ENCODE measurements at regions of chr17 and their contacts with region 1.

Region 1: DNA sequence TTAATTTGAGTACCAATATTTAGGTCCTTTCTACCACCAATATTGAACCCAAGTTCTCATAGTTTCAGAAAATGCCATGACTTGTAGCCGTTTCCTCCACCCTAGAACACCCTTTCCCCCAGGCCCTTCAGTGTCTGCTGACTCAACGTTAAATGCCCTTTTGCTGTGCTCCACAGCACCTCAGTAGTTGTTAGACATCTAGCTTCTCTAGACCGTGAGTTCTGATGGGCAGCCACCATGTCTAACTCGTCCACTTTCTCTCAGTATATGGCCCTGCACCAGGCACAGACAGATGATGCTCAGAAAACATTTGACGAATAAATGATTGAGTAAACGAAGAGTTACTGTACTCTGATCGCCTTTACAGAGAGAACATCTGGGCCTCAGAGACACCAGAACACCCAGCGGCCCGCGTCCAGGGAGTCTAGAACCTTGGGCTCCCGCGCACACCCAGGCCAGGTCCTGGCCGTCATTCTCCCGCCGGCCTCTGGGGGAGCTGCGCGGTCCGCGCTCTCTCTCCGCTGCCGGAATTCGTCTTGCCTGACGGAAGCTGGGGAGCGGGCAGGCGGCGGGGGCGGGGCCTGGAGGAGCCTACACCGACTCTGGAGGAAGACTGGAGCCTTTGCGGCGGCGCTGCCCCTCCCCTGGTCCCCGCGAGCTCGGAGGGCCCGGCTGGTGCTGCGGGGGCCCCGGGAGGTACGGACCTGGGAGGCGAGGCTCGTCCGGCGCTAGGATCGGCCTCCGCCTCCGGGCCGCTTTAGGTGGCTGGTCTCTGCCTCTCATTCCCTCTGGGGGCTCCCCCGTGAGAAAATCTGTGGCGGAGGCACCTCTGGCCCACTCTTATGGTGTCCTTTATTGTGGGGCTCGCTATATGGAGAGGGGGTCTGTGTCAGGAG is at the start of gene NKIRAS2:
- DNase-seq: peak; percentile 97
- ATAC-seq: peak; percentile 78
- H3K4me3 Mint-ChIP-seq: peak within 1 kb of the TSS; percentile 100
- H3K27ac Mint-ChIP-seq: peak within 1 kb of the TSS; percentile 88
- H3K4me1 Mint-ChIP-seq: peaks cover 52% of the 10 kb centered on the region
- H3K27me3 Mint-ChIP-seq: no peaks in the 10 kb centered on the region
- total RNA-seq, gene NKIRAS2: 16.3 to 17.2 TPM

Region 2: GRCh38 chr17:41864836-41865595 is 154.7 kb before region 1 on chr17 and contains the start of gene KLHL11:
- CTCF ChIA-PET with region 1: interaction called, 5 read pairs
- POLR2A ChIA-PET with region 1: interaction called, 3 read pairs
- intact Hi-C with region 1: loop called (anchors 2 to 5 kb)
- DNase-seq: peak; percentile 94
- ATAC-seq: peak; percentile 88
- H3K4me3 Mint-ChIP-seq: no peak within 1 kb of the TSS
- H3K27ac Mint-ChIP-seq: peak within 1 kb of the TSS; percentile 68
- H3K4me1 Mint-ChIP-seq: peaks cover 49% of the 10 kb centered on the region
- H3K27me3 Mint-ChIP-seq: no peaks in the 10 kb centered on the region
- total RNA-seq, gene KLHL11: 16.4 to 18.0 TPM

Region 3: GRCh38 chr17:41966463-41967140 is 53.2 kb before region 1 on chr17 and contains the start of gene CNP:
- CTCF ChIA-PET with region 1: interaction called, 16 read pairs
- POLR2A ChIA-PET with region 1: interaction called, 23 read pairs
- intact Hi-C with region 1: loop called (anchors 1 kb)
- DNase-seq: peak; percentile 95
- ATAC-seq: peak; percentile 75
- H3K4me3 Mint-ChIP-seq: peak within 1 kb of the TSS; percentile 79
- H3K27ac Mint-ChIP-seq: peak within 1 kb of the TSS; percentile 82
- H3K4me1 Mint-ChIP-seq: peaks cover 36% of the 10 kb centered on the region
- H3K27me3 Mint-ChIP-seq: no peaks in the 10 kb centered on the region
- total RNA-seq, gene CNP: 55.1 to 77.0 TPM

Region 4: GRCh38 chr17:42067351-42068091 is 47.8 kb after region 1 on chr17:
- CTCF ChIA-PET with region 1: interaction called, 5 read pairs
- POLR2A ChIA-PET with region 1: no interaction called
- intact Hi-C with region 1: loop called in 1 of 2 experiments (anchors 2 kb)
- DNase-seq: peak; percentile 85
- ATAC-seq: peak; percentile 62
- H3K4me3 Mint-ChIP-seq: no peak overlapping the region
- H3K27ac Mint-ChIP-seq: no peak overlapping the region
- H3K4me1 Mint-ChIP-seq: peaks cover 21% of the 10 kb centered on the region
- H3K27me3 Mint-ChIP-seq: peaks cover 9% of the 10 kb centered on the region

Region 5: GRCh38 chr17:42153919-42154742 is 134.4 kb after region 1 on chr17:
- CTCF ChIA-PET with region 1: interaction called, 3 read pairs
- POLR2A ChIA-PET with region 1: interaction called, 3 read pairs
- intact Hi-C with region 1: loop called in 1 of 2 experiments (anchors 1 kb)
- DNase-seq: no peak
- ATAC-seq: no peak
- H3K4me3 Mint-ChIP-seq: peak overlapping the region; percentile 97
- H3K27ac Mint-ChIP-seq: peak overlapping the region; percentile 93
- H3K4me1 Mint-ChIP-seq: peaks cover 31% of the 10 kb centered on the region
- H3K27me3 Mint-ChIP-seq: no peaks in the 10 kb centered on the region

Region 6: GRCh38 chr17:42287926-42288802 is 268.4 kb after region 1 on chr17 and contains the start of gene STAT5A:
- CTCF ChIA-PET with region 1: no interaction called
- POLR2A ChIA-PET with region 1: no interaction called
- intact Hi-C with region 1: loop called in 1 of 2 experiments (anchors 5 kb)
- DNase-seq: peak; percentile 90
- ATAC-seq: peak; percentile 65
- H3K4me3 Mint-ChIP-seq: peak within 1 kb of the TSS; percentile 81
- H3K27ac Mint-ChIP-seq: peak within 1 kb of the TSS; percentile 96
- H3K4me1 Mint-ChIP-seq: peaks cover 63% of the 10 kb centered on the region
- H3K27me3 Mint-ChIP-seq: no peaks in the 10 kb centered on the region
- total RNA-seq, gene STAT5A: 178 to 203 TPM

Region 7: DNA sequence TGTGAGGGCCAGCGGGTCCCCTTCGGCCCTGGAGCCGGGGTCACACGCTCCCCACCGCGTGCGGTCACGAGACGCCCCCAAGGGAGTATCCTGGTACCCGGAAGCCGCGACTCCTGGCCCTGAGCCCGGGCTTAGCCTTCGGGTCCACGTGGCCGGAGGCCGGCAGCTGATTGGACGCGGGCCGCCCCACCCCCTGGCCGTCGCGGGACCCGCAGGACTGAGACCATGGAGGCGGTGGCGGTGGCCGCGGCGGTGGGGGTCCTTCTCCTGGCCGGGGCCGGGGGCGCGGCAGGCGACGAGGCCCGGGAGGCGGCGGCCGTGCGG is 516.3 kb after region 1 on chr17 and contains the start of gene NAGLU:
- CTCF ChIA-PET with region 1: interaction called, 3 read pairs
- POLR2A ChIA-PET with region 1: no interaction called
- intact Hi-C with region 1: loop called in 1 of 2 experiments (anchors 5 kb)
- DNase-seq: peak; percentile 92
- ATAC-seq: peak; percentile 87
- H3K4me3 Mint-ChIP-seq: peak within 1 kb of the TSS; percentile 86
- H3K27ac Mint-ChIP-seq: peak within 1 kb of the TSS; percentile 90
- H3K4me1 Mint-ChIP-seq: peaks cover 30% of the 10 kb centered on the region
- H3K27me3 Mint-ChIP-seq: no peaks in the 10 kb centered on the region
- total RNA-seq, gene NAGLU: 9.7 to 12.5 TPM

Measured in activated CD4-positive, alpha-beta T cell treated with anti-CD3 and anti-CD28 coated beads for 36 hours (primary cell).